CD4-positive, alpha-beta T cell (primary cell): ENCODE measurements at regions of chr17 and their contacts with region 1.

Region 1: GRCh38 chr17:80364216-80364618 is 50.8 kb upstream of the ENDOV start:
- DNase-seq: peak in 3 of 14 experiments; percentile 9 to 22 (median 13)
- ATAC-seq: no peak
- H3K4me3 ChIP-seq: no peak overlapping the region
- H3K4me3 Mint-ChIP-seq: no peak overlapping the region
- H3K27ac ChIP-seq: no peak overlapping the region
- H3K27ac Mint-ChIP-seq: no peak overlapping the region
- H3K4me1 ChIP-seq: no peaks in the 10 kb centered on the region
- H3K4me1 Mint-ChIP-seq: no peaks in the 10 kb centered on the region
- H3K27me3 ChIP-seq: no peaks in the 10 kb centered on the region
- H3K27me3 Mint-ChIP-seq: no peaks in the 10 kb centered on the region
- CTCF ChIP-seq: no peak

Region 2: GRCh38 chr17:80082403-80083135 is 281.6 kb before region 1 on chr17:
- CTCF ChIA-PET with region 1: no interaction called
- POLR2A ChIA-PET with region 1: no interaction called
- intact Hi-C with region 1: loop called in 1 of 2 experiments (anchors 10 kb)
- DNase-seq: peak; percentile 38 to 82 (median 51)
- ATAC-seq: peak; percentile 72
- H3K4me3 ChIP-seq: no peak overlapping the region
- H3K4me3 Mint-ChIP-seq: no peak overlapping the region
- H3K27ac ChIP-seq: no peak overlapping the region
- H3K27ac Mint-ChIP-seq: no peak overlapping the region
- H3K4me1 ChIP-seq: peaks cover 6% of the 10 kb centered on the region
- H3K4me1 Mint-ChIP-seq: peaks cover 6% of the 10 kb centered on the region
- H3K27me3 ChIP-seq: no peaks in the 10 kb centered on the region
- H3K27me3 Mint-ChIP-seq: peaks cover 5% of the 10 kb centered on the region
- CTCF ChIP-seq: peak; percentile 82

Region 3: DNA sequence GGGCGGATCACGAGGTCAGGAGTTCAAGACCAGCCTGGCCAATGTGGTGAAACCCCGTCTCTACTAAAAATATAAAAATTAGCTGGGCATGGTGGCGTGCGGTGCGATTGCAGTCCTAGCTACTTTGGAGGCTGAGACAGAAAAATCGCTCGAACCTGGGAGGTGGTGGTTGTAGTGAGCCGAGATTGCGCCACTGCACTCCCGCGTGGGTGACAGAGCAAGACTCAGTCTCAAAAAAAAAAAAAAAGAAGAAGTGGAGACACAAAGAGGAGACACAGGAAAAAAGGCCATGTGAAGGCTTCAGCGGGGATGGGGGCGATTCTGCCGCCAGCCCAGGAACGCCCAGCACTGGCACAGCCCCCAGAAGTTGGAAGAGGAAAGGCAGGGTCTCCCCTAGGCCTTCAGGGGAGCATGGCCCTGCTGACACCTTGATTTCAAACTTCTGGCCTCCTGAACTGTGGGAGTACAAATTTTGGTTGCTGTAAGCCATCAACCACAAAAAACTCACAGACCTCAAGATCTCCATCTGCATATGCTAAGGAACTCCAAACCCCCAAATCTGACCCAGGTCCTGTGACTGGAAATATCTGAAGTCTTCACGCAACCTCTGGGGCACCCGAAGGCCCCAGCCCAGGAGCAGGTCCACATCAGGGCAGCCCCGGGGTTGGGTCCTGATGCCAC is 151.1 kb before region 1 on chr17:
- CTCF ChIA-PET with region 1: no interaction called
- POLR2A ChIA-PET with region 1: no interaction called
- intact Hi-C with region 1: no loop called
- DNase-seq: peak in 2 of 14 experiments; percentile 46 to 55
- ATAC-seq: no peak
- H3K4me3 ChIP-seq: no peak overlapping the region
- H3K4me3 Mint-ChIP-seq: no peak overlapping the region
- H3K27ac ChIP-seq: no peak overlapping the region
- H3K27ac Mint-ChIP-seq: no peak overlapping the region
- H3K4me1 ChIP-seq: peaks cover 13% of the 10 kb centered on the region
- H3K4me1 Mint-ChIP-seq: peaks cover 17% of the 10 kb centered on the region
- H3K27me3 ChIP-seq: no peaks in the 10 kb centered on the region
- H3K27me3 Mint-ChIP-seq: no peaks in the 10 kb centered on the region
- CTCF ChIP-seq: no peak